B cell (primary cell): ENCODE measurements at regions of chr11 and their contacts with region 1.

Region 1: DNA sequence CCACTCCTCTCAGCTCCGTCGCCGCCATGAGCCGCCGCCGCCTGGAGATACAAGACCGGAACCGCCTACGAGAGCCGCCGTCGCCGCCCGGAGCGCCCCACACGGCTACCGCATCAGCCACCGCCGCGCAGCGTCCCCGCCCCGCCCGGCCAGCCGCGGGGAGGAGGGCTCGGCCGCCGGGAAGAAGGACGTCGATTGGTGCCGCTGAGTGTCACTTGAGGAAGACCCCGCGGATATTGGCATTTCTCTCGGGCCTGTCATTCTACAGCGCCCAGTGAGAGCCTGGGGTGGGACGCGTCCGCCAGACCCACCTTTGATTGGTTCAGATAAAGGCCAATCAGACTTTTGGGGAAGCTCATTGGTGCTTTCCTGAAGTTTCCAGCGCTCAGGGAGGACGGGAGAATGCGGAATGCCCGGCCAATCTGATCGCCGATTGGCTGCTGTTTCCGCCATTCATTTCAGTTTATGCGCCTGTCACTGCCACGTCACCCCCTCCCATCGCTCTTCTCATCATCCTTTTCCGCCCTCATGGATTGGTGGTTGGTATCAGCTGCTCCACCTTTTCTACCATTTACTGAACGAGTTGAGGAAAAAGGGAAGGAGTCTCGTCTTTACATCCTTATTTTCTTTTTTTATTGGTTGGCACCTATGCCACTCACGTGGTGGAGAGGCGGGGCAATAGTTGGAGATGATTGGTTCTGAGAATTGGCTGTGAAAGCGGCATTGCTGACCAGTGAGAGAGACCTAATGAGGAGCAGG is at the start of gene OSBP:
- DNase-seq: peak; percentile 100
- ATAC-seq: peak; percentile 76
- H3K4me3 ChIP-seq: peak within 1 kb of the TSS; percentile 47 to 86 (median 77)
- H3K4me3 Mint-ChIP-seq: peak within 1 kb of the TSS; percentile 89
- H3K27ac ChIP-seq: peak within 1 kb of the TSS; percentile 92 to 97
- H3K27ac Mint-ChIP-seq: peak within 1 kb of the TSS; percentile 92
- H3K4me1 ChIP-seq: peaks cover 20% of the 10 kb centered on the region in 2 donors
- H3K4me1 Mint-ChIP-seq: peaks cover 43% of the 10 kb centered on the region
- H3K27me3 ChIP-seq: no peaks in the 10 kb centered on the region
- H3K27me3 Mint-ChIP-seq: no peaks in the 10 kb centered on the region
- CTCF ChIP-seq: no peak
- total RNA-seq, gene OSBP: 40.2 and 42.5 TPM in 2 replicates

Region 2: DNA sequence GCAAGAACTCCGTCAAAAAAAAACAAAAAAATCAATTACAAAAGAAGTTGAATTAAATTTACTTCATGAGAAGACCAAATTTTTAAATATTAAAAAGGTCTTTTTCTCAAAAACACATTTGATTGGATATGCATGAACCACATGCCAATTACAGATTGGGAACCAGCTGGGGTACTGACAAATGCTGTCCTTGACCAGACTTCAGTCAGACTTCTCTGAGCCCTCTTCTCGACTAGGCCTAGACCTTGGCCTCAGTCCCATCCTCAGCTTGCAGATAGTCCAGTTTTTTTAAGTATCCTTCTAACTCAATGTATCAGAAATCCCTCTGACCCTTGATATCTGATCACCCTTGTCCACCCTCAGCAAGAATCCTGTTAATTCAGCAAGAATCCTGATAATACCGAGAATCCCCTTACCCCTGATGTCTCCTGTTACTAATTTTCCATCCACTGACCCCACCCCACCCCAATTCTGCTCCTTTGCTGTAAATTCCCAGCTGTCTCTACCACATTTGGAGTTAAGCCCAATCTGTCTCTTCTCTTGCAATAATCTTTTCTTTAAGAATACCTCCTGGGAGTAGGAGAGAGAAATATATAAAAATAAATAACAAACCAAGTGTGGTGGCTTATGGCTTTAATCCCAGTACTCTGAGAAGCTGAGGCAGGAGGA is 73.5 kb before region 1 on chr11:
- CTCF ChIA-PET with region 1: interaction called, 10 read pairs
- POLR2A ChIA-PET with region 1: interaction called, 3 read pairs
- intact Hi-C with region 1: no loop called
- DNase-seq: no peak
- ATAC-seq: no peak
- H3K4me3 ChIP-seq: no peak overlapping the region
- H3K4me3 Mint-ChIP-seq: no peak overlapping the region
- H3K27ac ChIP-seq: no peak overlapping the region
- H3K27ac Mint-ChIP-seq: no peak overlapping the region
- H3K4me1 ChIP-seq: peaks cover 0 to 7% of the 10 kb centered on the region in 2 donors
- H3K4me1 Mint-ChIP-seq: peaks cover 3% of the 10 kb centered on the region
- H3K27me3 ChIP-seq: no peaks in the 10 kb centered on the region
- H3K27me3 Mint-ChIP-seq: peaks cover 6% of the 10 kb centered on the region
- CTCF ChIP-seq: no peak

Region 3: GRCh38 chr11:59560702-59561469 is 54.9 kb before region 1 on chr11:
- CTCF ChIA-PET with region 1: interaction called, 3 read pairs
- POLR2A ChIA-PET with region 1: interaction called, 8 read pairs
- intact Hi-C with region 1: loop called (anchors 2 kb)
- DNase-seq: peak; percentile 92
- ATAC-seq: peak; percentile 79
- H3K4me3 ChIP-seq: peak overlapping the region; percentile 84 to 98 (median 92)
- H3K4me3 Mint-ChIP-seq: peak overlapping the region; percentile 95
- H3K27ac ChIP-seq: peak overlapping the region; percentile 72 to 84
- H3K27ac Mint-ChIP-seq: peak overlapping the region; percentile 98
- H3K4me1 ChIP-seq: peaks cover 22 to 49% of the 10 kb centered on the region in 2 donors
- H3K4me1 Mint-ChIP-seq: peaks cover 44% of the 10 kb centered on the region
- H3K27me3 ChIP-seq: peaks cover 0 to 3% (median 1%) of the 10 kb centered on the region in 4 experiments
- H3K27me3 Mint-ChIP-seq: no peaks in the 10 kb centered on the region
- CTCF ChIP-seq: no peak

Region 4: GRCh38 chr11:59668950-59669610 is 53.3 kb after region 1 on chr11 and contains the start of gene PATL1:
- CTCF ChIA-PET with region 1: interaction called, 5 read pairs
- POLR2A ChIA-PET with region 1: interaction called, 40 read pairs
- intact Hi-C with region 1: loop called (anchors 1 kb)
- DNase-seq: peak; percentile 100
- ATAC-seq: peak; percentile 89
- H3K4me3 ChIP-seq: peak within 1 kb of the TSS; percentile 81 to 96 (median 93)
- H3K4me3 Mint-ChIP-seq: peak within 1 kb of the TSS; percentile 98
- H3K27ac ChIP-seq: peak within 1 kb of the TSS; percentile 98 to 100
- H3K27ac Mint-ChIP-seq: peak within 1 kb of the TSS; percentile 100
- H3K4me1 ChIP-seq: peaks cover 20% of the 10 kb centered on the region in 2 donors
- H3K4me1 Mint-ChIP-seq: peaks cover 33% of the 10 kb centered on the region
- H3K27me3 ChIP-seq: no peaks in the 10 kb centered on the region
- H3K27me3 Mint-ChIP-seq: no peaks in the 10 kb centered on the region
- CTCF ChIP-seq: peak; percentile 0
- total RNA-seq, gene PATL1: 45.0 and 46.0 TPM in 2 replicates